Motor neuron (in vitro differentiated cells): ENCODE measurements at regions of chr10 and their contacts with region 1.

Region 1: DNA sequence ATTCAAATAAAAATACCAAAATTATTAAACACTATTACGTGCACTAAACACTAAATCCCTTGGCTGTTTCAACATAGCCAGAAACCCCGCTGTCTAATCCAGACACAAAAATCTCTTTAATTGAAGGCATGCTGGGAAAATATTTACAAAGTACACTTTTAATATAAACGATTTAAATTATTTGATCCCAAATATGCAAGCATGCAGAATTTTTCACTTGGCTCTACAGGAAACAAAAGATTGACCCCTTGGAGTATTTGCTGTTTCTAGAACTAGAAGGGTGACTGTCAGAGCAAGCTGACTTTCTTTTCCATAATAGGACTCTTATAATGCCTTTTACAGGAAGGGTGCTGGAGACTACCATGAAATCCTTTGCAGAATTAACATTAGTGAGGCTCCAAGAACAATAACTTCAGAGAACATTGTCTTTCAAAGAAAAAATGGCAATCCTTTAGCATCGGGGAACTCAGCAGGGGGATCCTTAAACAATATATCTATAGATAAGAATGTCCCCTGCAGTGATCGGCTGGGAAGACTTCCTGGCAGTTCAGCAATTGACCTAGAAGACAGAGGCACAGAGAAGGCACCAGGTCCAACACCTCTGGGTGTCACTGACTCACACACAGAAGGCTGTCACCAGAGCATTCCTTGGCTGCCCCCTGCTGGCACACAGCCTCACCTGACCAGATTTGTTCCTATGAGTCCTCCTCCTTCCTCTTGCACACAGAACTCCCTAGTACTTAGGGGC is 55.8 kb upstream of the MRLN start:
- ATAC-seq: peak; percentile 44 to 94 (median 74)
- H3K4me3 ChIP-seq: no peak overlapping the region
- H3K27ac ChIP-seq: no peak overlapping the region
- H3K4me1 ChIP-seq: peaks cover 0 to 4% of the 10 kb centered on the region in 2 donors

Region 2: DNA sequence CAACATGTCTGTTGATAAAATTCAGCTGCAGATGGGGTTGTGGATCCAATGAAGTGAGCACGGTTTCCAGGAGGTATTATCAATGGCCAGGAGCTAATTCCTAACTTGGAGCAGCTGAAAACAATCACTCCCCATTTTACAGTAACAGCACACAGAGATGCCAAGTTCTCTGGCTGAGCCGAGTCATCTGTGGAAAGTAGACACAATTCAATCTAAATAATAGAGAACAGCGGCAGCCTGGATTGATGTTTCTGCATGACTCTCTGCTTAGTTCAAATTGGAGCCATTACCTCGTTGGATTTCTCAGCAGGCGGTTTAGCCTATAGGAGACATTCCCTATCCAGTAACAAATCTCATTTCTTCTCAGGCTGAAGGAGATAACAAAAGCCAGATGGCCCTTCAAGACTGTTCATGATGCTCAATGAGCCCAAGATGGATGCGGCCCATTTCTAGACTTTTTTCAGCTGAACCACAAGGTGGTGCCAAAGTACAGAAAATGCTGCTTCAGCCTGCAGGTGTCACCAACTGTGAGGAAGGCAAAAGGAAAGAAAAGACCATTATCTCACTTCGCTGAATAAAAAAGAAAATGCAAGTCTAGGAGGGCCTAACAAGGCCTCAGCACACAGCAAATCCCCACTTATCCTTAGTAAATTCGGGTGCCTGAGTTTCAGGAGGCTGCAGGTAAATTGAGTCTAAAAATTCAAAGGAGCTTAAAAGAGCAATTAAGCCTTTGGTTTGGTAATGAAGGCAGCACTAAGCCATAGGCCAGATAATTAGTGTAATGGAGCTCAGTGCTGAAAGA is 183.1 kb before region 1 on chr10:
- in situ Hi-C with region 1: loop called in 4 of 9 experiments (anchors 10 to 25 kb)
- ATAC-seq: peak; percentile 75 to 96 (median 94)
- H3K4me3 ChIP-seq: no peak overlapping the region
- H3K27ac ChIP-seq: no peak overlapping the region
- H3K4me1 ChIP-seq: peaks cover 3 to 5% of the 10 kb centered on the region in 2 donors